ENCODE measurements at regions of chr1 and their contacts with region 1.

Region 1: DNA sequence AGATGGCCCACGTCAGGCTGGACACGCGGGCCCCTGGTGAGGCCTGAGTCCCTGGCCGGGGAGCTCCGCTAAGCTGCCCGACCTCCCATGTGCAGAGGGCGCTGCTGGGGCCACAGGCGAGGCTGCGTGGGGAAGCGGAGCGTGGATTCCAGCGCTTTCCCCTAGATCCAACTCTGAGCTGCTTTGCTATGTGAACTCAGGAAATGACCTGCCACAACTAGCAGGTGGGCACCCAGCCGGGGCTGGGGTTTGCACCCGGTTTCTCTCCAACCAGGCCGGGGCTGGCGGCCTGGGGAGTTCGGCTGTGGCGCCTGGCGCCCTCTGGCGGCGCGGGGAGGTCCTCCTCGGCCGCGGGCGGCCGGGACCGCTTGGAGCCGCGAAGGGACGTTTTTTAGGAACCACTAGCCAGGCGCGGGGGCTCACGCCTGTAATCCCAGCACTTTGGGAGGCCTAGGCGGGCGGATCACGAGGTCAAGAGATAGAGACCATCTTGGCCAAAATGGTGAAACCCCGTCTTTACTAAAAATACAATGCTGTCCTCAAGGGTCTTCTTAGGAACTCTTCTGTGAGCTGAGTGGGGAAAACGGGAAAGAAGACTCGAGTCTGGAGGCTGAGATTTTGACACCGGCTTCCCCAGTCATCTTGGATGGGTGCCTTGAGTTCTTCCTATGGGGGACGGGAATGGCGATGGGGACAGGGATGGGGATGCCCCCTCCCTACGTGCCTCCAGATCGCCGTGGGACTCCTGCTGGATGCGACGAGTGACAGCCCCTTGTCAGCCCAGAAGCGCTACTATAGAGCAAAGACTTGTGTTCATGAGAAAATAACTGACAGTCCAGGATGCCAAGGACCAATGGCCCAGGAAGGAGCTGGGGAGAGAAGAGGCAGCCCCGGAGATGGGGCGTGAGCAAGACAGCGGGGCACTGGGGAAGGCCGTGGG is 12.6 kb downstream of the PYCR2 start:
- H3K4me3 ChIP-seq: no peak overlapping the region
- H3K27ac ChIP-seq: no peak overlapping the region
- H3K4me1 ChIP-seq: no peaks in the 10 kb centered on the region
- CTCF ChIP-seq: no peak

Region 2: GRCh38 chr1:225467193-225468020 is 444.1 kb before region 1 on chr1:
- CTCF ChIA-PET with region 1: interaction called, 20 read pairs
- POLR2A ChIA-PET with region 1: no interaction called
- H3K4me3 ChIP-seq: no peak overlapping the region
- H3K27ac ChIP-seq: no peak overlapping the region
- H3K4me1 ChIP-seq: peaks cover 21% of the 10 kb centered on the region
- CTCF ChIP-seq: no peak

Region 3: GRCh38 chr1:225888898-225889601 is 22.4 kb before region 1 on chr1 and contains the start of gene LEFTY1:
- CTCF ChIA-PET with region 1: interaction called, 12 read pairs
- POLR2A ChIA-PET with region 1: no interaction called
- H3K4me3 ChIP-seq: no peak within 1 kb of the TSS
- H3K27ac ChIP-seq: no peak within 1 kb of the TSS
- H3K4me1 ChIP-seq: no peaks in the 10 kb centered on the region
- CTCF ChIP-seq: no peak

Region 4: DNA sequence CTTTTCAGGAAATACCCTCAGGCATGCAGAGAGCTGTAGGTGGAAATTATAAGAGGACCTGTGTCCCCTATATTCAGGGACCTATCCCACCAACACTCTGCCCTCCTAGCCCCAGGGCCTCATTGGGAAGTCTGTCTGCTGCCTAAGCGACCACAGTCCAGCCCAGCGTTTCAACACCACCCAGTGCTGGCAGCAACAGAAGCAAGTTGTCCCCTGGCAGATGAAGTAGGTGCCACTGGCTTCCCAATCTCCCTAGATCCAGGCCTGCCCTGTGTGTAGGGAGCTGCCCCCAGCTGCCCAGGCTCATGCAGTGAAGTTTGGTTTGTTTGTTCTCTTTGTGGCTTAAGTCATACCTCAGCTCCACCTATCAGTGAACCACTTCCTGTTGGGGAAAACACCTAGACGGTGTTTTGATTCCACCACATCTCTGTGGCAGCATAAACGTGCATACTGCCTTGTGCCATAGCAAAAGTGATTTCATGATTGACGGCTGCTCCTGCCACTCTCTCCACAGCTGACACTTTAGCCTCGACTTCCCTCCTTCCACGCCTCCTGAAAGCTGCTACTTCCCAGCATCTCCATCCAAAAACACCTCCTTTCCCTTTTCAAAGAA is 14.4 kb before region 1 on chr1:
- CTCF ChIA-PET with region 1: interaction called, 21 read pairs
- POLR2A ChIA-PET with region 1: no interaction called
- H3K4me3 ChIP-seq: no peak overlapping the region
- H3K27ac ChIP-seq: no peak overlapping the region
- H3K4me1 ChIP-seq: no peaks in the 10 kb centered on the region; the same call in 1 of the 2 replicates
- CTCF ChIP-seq: no peak

Region 5: GRCh38 chr1:225923692-225924555 is 12.5 kb after region 1 on chr1 and contains the start of gene PYCR2:
- CTCF ChIA-PET with region 1: interaction called, 10 read pairs
- POLR2A ChIA-PET with region 1: interaction called, 10 read pairs
- H3K4me3 ChIP-seq: peak within 1 kb of the TSS; percentile 80
- H3K27ac ChIP-seq: peak within 1 kb of the TSS; percentile 88
- H3K4me1 ChIP-seq: peaks cover 11% of the 10 kb centered on the region; the same call in 1 of the 2 replicates
- CTCF ChIP-seq: peak; percentile 81; the same call in 1 of the 2 replicates

Measured in HEK293 (cell line).